Naive thymus-derived CD4-positive, alpha-beta T cell (primary cell): ENCODE measurements at regions of chr6 and their contacts with region 1.

Region 1: DNA sequence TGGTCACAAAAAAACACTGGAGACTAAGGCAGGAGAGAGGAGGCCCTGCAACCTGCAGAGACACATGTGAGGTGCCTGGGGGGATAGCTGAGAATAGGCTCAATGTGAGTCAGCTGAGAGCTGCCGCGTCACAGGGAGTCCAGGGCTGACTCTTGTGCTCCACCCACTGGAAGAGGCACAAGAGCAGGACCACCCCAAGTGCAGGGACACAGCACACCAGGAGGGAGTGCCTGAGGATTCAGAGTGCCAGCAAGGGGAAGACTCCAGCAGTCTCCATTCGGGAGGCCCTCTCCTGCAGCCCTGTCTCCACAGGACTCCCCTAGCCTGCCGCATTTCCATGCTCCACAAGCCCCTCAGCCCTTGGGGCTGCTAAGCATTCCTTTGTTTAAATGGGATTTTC is 105.5 kb downstream of the HUS1B start:
- DNase-seq: no peak
- ATAC-seq: peak; percentile 24
- H3K4me3 ChIP-seq: no peak overlapping the region
- H3K4me3 Mint-ChIP-seq: no peak overlapping the region
- H3K27ac ChIP-seq: no peak overlapping the region
- H3K27ac Mint-ChIP-seq: peak overlapping the region in 2 of 9 donors; percentile 7 to 22
- H3K4me1 ChIP-seq: peaks cover 4 to 13% of the 10 kb centered on the region in 2 donors
- H3K4me1 Mint-ChIP-seq: peaks cover 5 to 48% (median 12%) of the 10 kb centered on the region in 7 donors
- H3K27me3 ChIP-seq: no peaks in the 10 kb centered on the region
- H3K27me3 Mint-ChIP-seq: no peaks in the 10 kb centered on the region

Region 2: GRCh38 chr6:490251-491037 is 61.0 kb before region 1 on chr6:
- CTCF ChIA-PET with region 1: no interaction called
- POLR2A ChIA-PET with region 1: interaction called, 3 read pairs
- intact Hi-C with region 1: loop called in 1 of 2 experiments (anchors 5 kb)
- DNase-seq: no peak
- ATAC-seq: peak; percentile 47
- H3K4me3 ChIP-seq: peak overlapping the region; percentile 25
- H3K4me3 Mint-ChIP-seq: peak overlapping the region; percentile 19 to 87 (median 70)
- H3K27ac ChIP-seq: no peak overlapping the region
- H3K27ac Mint-ChIP-seq: peak overlapping the region; percentile 54 to 98 (median 84)
- H3K4me1 ChIP-seq: peaks cover 60 to 65% of the 10 kb centered on the region in 2 donors
- H3K4me1 Mint-ChIP-seq: peaks cover 46 to 78% (median 70%) of the 10 kb centered on the region in 7 donors
- H3K27me3 ChIP-seq: no peaks in the 10 kb centered on the region
- H3K27me3 Mint-ChIP-seq: no peaks in the 10 kb centered on the region

Region 3: GRCh38 chr6:506508-506907 is 44.9 kb before region 1 on chr6:
- CTCF ChIA-PET with region 1: no interaction called
- POLR2A ChIA-PET with region 1: no interaction called
- intact Hi-C with region 1: loop called (anchors 5 kb)
- DNase-seq: peak in 1 of 9 donors; percentile 35
- ATAC-seq: no peak
- H3K4me3 ChIP-seq: no peak overlapping the region
- H3K4me3 Mint-ChIP-seq: peak overlapping the region in 7 of 10 donors; percentile 25 to 61 (median 30)
- H3K27ac ChIP-seq: peak overlapping the region; percentile 5
- H3K27ac Mint-ChIP-seq: peak overlapping the region; percentile 32 to 89 (median 73)
- H3K4me1 ChIP-seq: peaks cover 21 to 42% of the 10 kb centered on the region in 2 donors
- H3K4me1 Mint-ChIP-seq: peaks cover 51 to 95% (median 85%) of the 10 kb centered on the region in 7 donors
- H3K27me3 ChIP-seq: no peaks in the 10 kb centered on the region
- H3K27me3 Mint-ChIP-seq: no peaks in the 10 kb centered on the region

Region 4: DNA sequence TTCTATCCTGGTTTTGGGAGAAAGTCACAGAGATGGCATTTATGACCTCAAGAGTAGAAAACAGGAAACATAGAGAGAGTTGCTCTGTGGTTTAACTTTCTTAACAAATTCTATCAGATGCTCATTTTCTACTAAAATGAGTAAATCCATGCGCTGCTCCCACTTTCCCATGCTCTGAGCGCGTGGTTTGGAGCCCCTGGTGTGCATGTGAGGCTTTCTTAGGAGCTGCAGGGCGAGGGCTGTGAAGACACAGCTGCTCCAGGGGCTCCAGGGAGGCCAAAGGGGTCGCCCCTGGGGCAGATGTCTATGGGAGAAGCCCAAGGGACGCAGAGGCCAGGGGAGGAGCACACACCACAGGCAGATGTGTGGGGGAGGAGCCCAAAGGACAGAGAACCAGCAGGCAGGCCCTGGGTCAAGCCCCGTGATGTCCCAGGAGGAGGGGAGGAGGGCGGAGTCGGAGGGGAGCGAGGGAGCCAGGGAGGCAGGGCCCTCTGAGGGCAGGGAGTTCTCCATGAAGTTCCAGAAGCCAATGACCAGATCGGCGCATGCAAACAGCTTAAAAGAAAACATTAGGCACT is 36.9 kb before region 1 on chr6:
- CTCF ChIA-PET with region 1: no interaction called
- POLR2A ChIA-PET with region 1: no interaction called
- intact Hi-C with region 1: loop called (anchors 5 kb)
- DNase-seq: no peak
- ATAC-seq: no peak
- H3K4me3 ChIP-seq: no peak overlapping the region
- H3K4me3 Mint-ChIP-seq: peak overlapping the region in 7 of 10 donors; percentile 9 to 63 (median 43)
- H3K27ac ChIP-seq: no peak overlapping the region
- H3K27ac Mint-ChIP-seq: peak overlapping the region in 8 of 9 donors; percentile 49 to 81 (median 70)
- H3K4me1 ChIP-seq: peaks cover 16 to 22% of the 10 kb centered on the region in 2 donors
- H3K4me1 Mint-ChIP-seq: peaks cover 32 to 66% (median 51%) of the 10 kb centered on the region in 7 donors
- H3K27me3 ChIP-seq: no peaks in the 10 kb centered on the region
- H3K27me3 Mint-ChIP-seq: no peaks in the 10 kb centered on the region

Region 5: GRCh38 chr6:537114-537513 is 14.3 kb before region 1 on chr6:
- CTCF ChIA-PET with region 1: no interaction called
- POLR2A ChIA-PET with region 1: no interaction called
- intact Hi-C with region 1: no loop called
- DNase-seq: no peak
- ATAC-seq: no peak
- H3K4me3 ChIP-seq: no peak overlapping the region
- H3K4me3 Mint-ChIP-seq: no peak overlapping the region
- H3K27ac ChIP-seq: no peak overlapping the region
- H3K27ac Mint-ChIP-seq: no peak overlapping the region
- H3K4me1 ChIP-seq: no peaks in the 10 kb centered on the region
- H3K4me1 Mint-ChIP-seq: peaks cover 0 to 4% (median 0%) of the 10 kb centered on the region in 7 donors
- H3K27me3 ChIP-seq: no peaks in the 10 kb centered on the region
- H3K27me3 Mint-ChIP-seq: no peaks in the 10 kb centered on the region

Region 6: DNA sequence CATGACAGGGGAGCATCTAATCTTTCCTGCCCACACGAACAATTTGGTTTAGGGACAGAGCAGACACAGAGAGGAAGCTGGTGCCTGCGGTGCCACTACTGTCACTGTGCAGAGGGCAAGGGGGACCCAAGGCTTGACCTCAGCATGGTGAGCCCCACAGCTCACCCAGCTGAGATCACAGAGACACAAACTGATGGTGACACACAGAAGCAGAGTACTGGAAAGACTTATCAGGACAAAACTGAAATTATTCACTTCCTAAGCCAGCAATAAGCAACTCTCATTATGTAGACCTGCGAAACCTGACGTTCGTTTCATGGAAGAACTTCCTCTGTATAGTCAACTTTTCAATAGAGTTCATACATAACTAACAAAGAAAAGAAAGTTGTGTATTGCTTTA is 19.4 kb after region 1 on chr6:
- CTCF ChIA-PET with region 1: no interaction called
- POLR2A ChIA-PET with region 1: no interaction called
- intact Hi-C with region 1: loop called in 1 of 2 experiments (anchors 2 kb)
- DNase-seq: no peak
- ATAC-seq: no peak
- H3K4me3 ChIP-seq: no peak overlapping the region
- H3K4me3 Mint-ChIP-seq: no peak overlapping the region
- H3K27ac ChIP-seq: no peak overlapping the region
- H3K27ac Mint-ChIP-seq: no peak overlapping the region
- H3K4me1 ChIP-seq: no peaks in the 10 kb centered on the region
- H3K4me1 Mint-ChIP-seq: peaks cover 0 to 39% (median 0%) of the 10 kb centered on the region in 7 donors
- H3K27me3 ChIP-seq: no peaks in the 10 kb centered on the region
- H3K27me3 Mint-ChIP-seq: no peaks in the 10 kb centered on the region